H1 (cell line): ENCODE measurements at regions of chr19 and their contacts with region 1.

Region 1: DNA sequence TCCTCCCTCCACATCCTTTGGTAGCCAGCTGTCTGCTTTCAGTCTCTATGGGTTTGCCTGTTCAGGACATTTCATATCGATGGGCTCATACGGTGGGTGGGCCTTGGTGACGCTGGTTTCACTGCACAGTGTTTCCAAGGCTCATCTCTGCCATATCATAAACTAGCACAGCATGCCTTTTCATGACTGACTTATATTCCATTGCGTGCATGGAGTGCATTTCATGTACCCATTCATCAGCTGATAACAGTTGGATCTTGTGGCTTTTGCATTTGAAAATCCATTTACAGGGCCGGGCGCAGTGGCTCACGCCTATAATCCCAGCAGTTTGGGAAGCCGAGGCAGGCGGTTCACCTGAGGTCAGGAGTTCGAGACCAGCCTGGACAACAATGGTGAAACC is 69.9 kb downstream of the TDRD12 start:
- DNase-seq: no peak
- H3K4me3 ChIP-seq: no peak overlapping the region
- H3K27ac ChIP-seq: no peak overlapping the region
- H3K4me1 ChIP-seq: peaks cover 0 to 5% (median 1%) of the 10 kb centered on the region in 4 experiments; a peak in 3 of 7 replicates
- H3K27me3 ChIP-seq: no peaks in the 10 kb centered on the region
- CTCF ChIP-seq: no peak
- EP300 ChIP-seq: no peak
- POLR2A ChIP-seq: no peak
- RAD21 ChIP-seq: no peak

Region 2: GRCh38 chr19:32775836-32776235 is 13.6 kb before region 1 on chr19:
- CTCF ChIA-PET with region 1: interaction called, 12 read pairs
- POLR2A ChIA-PET with region 1: no interaction called
- DNase-seq: no peak
- H3K4me3 ChIP-seq: no peak overlapping the region
- H3K27ac ChIP-seq: no peak overlapping the region
- H3K4me1 ChIP-seq: peaks cover 2 to 11% (median 4%) of the 10 kb centered on the region in 4 experiments; a peak in 6 of 7 replicates
- H3K27me3 ChIP-seq: no peaks in the 10 kb centered on the region
- CTCF ChIP-seq: no peak
- EP300 ChIP-seq: no peak
- POLR2A ChIP-seq: no peak
- RAD21 ChIP-seq: no peak

Region 3: DNA sequence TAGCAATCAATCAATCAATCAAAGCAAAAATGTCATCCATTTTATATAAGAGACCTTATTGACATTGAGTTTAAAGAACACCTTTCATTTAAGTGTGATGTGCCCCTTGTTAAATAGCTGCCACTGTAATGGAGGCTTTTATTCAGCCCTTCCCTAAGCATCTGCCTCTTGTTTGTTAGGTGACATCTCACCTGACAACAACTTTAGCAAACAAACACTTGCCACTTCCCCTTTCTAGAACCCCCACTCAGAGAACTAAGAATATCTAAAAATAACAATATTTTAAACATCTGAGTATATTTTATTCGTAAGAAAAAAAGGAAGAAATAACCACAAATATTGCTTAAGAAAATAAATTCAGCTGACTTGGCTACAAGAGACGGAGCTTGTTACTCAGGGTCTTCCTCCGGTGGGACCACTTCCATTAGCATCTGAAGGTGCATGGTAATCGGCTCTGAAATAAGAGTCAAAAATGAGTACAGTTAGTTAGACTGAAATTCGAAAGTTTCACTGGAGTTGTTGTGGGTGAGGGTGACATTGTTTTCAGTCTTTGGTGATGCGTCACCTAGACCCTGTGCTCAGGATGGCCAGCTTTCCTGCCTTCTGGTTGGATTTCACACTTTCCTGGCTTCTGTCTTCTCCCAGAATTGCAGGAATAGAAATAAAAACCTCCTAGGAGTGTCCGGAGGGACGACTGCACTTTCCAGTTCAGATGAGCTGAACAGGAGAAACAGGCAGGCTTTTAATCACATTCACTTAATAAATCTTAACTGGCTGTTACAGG is 41.0 kb after region 1 on chr19:
- CTCF ChIA-PET with region 1: no interaction called
- POLR2A ChIA-PET with region 1: no interaction called
- DNase-seq: no peak
- H3K4me3 ChIP-seq: no peak overlapping the region
- H3K27ac ChIP-seq: no peak overlapping the region
- H3K4me1 ChIP-seq: peaks cover 0 to 9% (median 4%) of the 10 kb centered on the region in 4 experiments; a peak in 5 of 7 replicates
- H3K27me3 ChIP-seq: no peaks in the 10 kb centered on the region
- CTCF ChIP-seq: no peak
- EP300 ChIP-seq: no peak
- POLR2A ChIP-seq: no peak
- RAD21 ChIP-seq: no peak